ENCODE measurements at regions of chr1 and their contacts with region 1.

Region 1: GRCh38 chr1:87131809-87132283 is 196.8 kb upstream of the LMO4 start:
- DNase-seq: peak in 1 of 2 donors; percentile 85
- H3K4me3 ChIP-seq: peak overlapping the region; percentile 62 to 77
- H3K27ac ChIP-seq: peak overlapping the region; percentile 59 to 62
- H3K4me1 ChIP-seq: peaks cover 6 to 7% of the 10 kb centered on the region in 2 donors
- H3K27me3 ChIP-seq: no peaks in the 10 kb centered on the region
- CTCF ChIP-seq: peak; percentile 75 to 97 (median 95)

Region 2: GRCh38 chr1:87007323-87007722 is 124.5 kb before region 1 on chr1:
- intact Hi-C with region 1: no loop called
- DNase-seq: no peak
- H3K4me3 ChIP-seq: no peak overlapping the region
- H3K27ac ChIP-seq: no peak overlapping the region
- H3K4me1 ChIP-seq: no peaks in the 10 kb centered on the region
- H3K27me3 ChIP-seq: no peaks in the 10 kb centered on the region
- CTCF ChIP-seq: no peak

Region 3: GRCh38 chr1:87196110-87196827 is 64.4 kb after region 1 on chr1:
- intact Hi-C with region 1: no loop called
- DNase-seq: no peak
- H3K4me3 ChIP-seq: no peak overlapping the region
- H3K27ac ChIP-seq: no peak overlapping the region
- H3K4me1 ChIP-seq: no peaks in the 10 kb centered on the region
- H3K27me3 ChIP-seq: no peaks in the 10 kb centered on the region
- CTCF ChIP-seq: no peak

Region 4: GRCh38 chr1:87379306-87379705 is 247.5 kb after region 1 on chr1:
- intact Hi-C with region 1: no loop called
- DNase-seq: no peak
- H3K4me3 ChIP-seq: no peak overlapping the region
- H3K27ac ChIP-seq: no peak overlapping the region
- H3K4me1 ChIP-seq: no peaks in the 10 kb centered on the region
- H3K27me3 ChIP-seq: no peaks in the 10 kb centered on the region
- CTCF ChIP-seq: no peak

Region 5: DNA sequence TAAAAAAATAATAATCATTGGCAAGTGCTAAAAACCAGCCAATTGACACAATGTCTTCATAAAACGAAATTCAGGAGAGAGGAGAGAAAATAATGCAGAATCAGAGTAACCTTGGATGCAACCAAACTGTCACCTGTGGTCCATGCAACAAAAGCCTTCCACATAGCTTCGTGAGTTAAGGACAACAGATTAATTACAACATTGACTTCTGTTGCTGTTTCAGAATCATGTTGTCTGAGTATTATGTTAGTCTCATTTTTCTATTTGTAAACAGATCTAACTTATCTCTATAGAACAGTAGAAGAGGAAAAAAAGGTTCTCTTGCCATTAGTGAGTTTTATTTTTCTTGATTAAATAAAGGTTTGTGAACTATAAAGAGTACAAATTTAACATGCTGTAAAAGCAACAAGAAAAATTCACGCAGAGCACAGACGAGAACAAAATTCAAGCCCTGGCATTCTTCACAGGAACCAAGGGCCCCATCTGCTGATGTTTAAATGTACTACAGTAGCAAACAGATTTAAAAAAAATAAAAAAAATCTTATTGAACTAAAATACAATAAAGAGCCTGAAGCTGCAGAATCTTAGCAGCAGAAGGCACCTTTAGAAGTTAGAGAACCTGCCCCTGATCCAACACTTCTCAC is 1171.1 kb after region 1 on chr1:
- intact Hi-C with region 1: loop called (anchors 5 kb)
- DNase-seq: no peak
- H3K4me3 ChIP-seq: no peak overlapping the region
- H3K27ac ChIP-seq: no peak overlapping the region
- H3K4me1 ChIP-seq: no peaks in the 10 kb centered on the region
- H3K27me3 ChIP-seq: no peaks in the 10 kb centered on the region
- CTCF ChIP-seq: peak in 2 of 3 experiments; percentile 26 to 55